ENCODE measurements at regions of chr20 and their contacts with region 1.

Region 1: DNA sequence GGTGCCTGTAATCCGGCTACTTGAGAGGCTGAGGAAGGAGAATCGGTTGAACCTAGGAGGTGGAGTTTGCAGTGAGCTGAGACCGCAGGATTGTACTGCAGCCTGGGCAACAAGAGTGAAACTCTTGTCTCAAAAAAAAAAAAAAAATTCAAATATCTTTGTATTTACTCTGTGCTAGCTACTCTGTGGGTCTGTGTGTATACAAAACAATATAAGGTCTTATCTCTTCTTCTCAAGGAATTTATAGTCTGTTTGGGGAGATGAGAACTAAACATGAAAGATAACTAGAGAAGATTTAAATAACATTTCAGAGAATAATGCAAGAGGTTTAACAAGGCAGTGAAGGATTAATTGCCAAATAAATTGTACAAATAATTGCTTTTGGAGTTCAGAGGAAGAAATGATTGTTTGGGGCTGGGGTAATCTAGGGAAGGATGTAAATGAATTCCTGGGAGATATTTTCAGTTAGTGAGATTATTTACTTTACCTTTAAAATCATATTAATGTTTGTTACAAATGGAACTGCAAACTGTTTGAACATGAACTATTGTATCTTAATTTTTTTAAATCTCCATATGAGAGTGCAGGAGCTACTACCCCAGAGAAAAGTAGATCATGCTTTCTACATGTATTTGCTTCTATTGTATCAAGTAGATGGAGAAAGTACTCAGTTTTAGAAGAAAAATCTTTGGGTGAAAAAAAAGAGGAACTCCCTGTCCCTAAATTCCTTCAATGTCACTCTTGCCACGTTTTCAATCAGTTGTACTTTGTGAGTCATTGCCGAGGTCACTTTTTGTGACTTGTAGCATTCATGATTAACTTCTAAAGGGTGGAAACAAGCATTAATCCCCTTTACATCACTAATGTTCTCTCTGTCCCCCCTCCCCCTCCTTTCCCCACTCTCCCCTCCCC is 39.0 kb downstream of the NCOA3 start:
- DNase-seq: no peak
- H3K4me3 Mint-ChIP-seq: no peak overlapping the region
- H3K27ac Mint-ChIP-seq: peak overlapping the region; percentile 15
- H3K4me1 Mint-ChIP-seq: peaks cover 67% of the 10 kb centered on the region
- H3K27me3 Mint-ChIP-seq: no peaks in the 10 kb centered on the region

Region 2: GRCh38 chr20:47576516-47577033 is 35.9 kb after region 1 on chr20:
- CTCF ChIA-PET with region 1: no interaction called
- POLR2A ChIA-PET with region 1: no interaction called
- intact Hi-C with region 1: loop called (anchors 5 kb)
- DNase-seq: no peak
- H3K4me3 Mint-ChIP-seq: peak overlapping the region; percentile 7
- H3K27ac Mint-ChIP-seq: no peak overlapping the region
- H3K4me1 Mint-ChIP-seq: peaks cover 76% of the 10 kb centered on the region
- H3K27me3 Mint-ChIP-seq: no peaks in the 10 kb centered on the region

Measured in activated CD4-positive, alpha-beta memory T cell treated with anti-CD3 and anti-CD28 coated beads for 36 hours (primary cell).